Activated CD4-positive, alpha-beta T cell treated with anti-CD3 and anti-CD28 coated beads for 36 hours (primary cell): ENCODE measurements at regions of chr7 and their contacts with region 1.

Region 1: DNA sequence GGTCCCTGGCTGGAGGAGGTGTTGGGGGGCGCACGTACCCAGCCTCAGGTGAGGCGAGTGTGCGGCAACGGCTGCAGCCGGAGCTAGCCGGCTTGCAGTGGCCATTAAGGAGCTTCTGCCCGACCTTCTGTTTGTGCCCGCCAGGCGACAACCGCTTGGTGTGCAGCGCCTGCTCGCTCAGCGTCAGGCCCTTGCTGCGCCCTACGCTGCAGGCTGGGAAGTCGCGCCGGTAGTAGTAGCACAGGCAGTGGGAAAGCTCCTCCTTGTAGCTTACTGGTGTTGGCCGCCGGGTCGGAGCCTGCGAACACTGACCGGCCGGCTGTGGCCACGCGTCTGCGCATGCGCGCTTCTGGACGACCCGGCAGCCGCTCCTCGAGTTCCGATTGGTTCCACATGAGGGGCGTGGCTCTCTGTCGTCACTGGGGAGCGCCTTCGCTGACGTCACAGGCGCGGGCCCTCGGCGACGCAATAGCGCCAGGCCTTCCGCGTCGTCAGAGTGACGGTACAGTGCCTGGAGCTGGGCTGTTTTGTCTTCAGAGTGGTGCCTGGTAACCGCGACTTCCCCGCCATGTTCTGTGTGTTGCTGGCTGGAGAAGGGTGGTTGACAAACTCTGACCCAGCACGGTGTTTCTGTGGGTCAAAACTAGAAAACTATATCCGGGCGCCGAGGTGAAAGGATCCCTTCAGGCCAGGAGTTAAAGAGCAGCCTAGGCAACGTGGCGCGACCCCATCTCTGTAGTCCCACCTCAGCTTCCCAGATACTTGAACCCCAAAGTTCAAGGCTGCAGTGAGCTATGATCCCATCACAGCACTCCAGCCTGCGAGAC is 76.3 kb upstream of the TMEM248 start:
- DNase-seq: peak; percentile 99
- ATAC-seq: peak; percentile 94
- H3K4me3 Mint-ChIP-seq: peak overlapping the region; percentile 95
- H3K27ac Mint-ChIP-seq: peak overlapping the region; percentile 99
- H3K4me1 Mint-ChIP-seq: peaks cover 24% of the 10 kb centered on the region
- H3K27me3 Mint-ChIP-seq: no peaks in the 10 kb centered on the region

Region 2: GRCh38 chr7:65750511-65751344 is 1094.0 kb before region 1 on chr7:
- CTCF ChIA-PET with region 1: no interaction called
- POLR2A ChIA-PET with region 1: no interaction called
- intact Hi-C with region 1: loop called in 1 of 2 experiments (anchors 2 kb)
- DNase-seq: peak; percentile 93
- ATAC-seq: peak; percentile 99
- H3K4me3 Mint-ChIP-seq: peak overlapping the region; percentile 95
- H3K27ac Mint-ChIP-seq: peak overlapping the region; percentile 94
- H3K4me1 Mint-ChIP-seq: peaks cover 31% of the 10 kb centered on the region
- H3K27me3 Mint-ChIP-seq: no peaks in the 10 kb centered on the region

Region 3: GRCh38 chr7:66591799-66592596 is 252.8 kb before region 1 on chr7:
- CTCF ChIA-PET with region 1: no interaction called
- POLR2A ChIA-PET with region 1: no interaction called
- intact Hi-C with region 1: loop called in 1 of 2 experiments (anchors 1 kb)
- DNase-seq: peak; percentile 96
- ATAC-seq: peak; percentile 98
- H3K4me3 Mint-ChIP-seq: peak overlapping the region; percentile 94
- H3K27ac Mint-ChIP-seq: peak overlapping the region; percentile 98
- H3K4me1 Mint-ChIP-seq: peaks cover 46% of the 10 kb centered on the region
- H3K27me3 Mint-ChIP-seq: no peaks in the 10 kb centered on the region

Region 4: DNA sequence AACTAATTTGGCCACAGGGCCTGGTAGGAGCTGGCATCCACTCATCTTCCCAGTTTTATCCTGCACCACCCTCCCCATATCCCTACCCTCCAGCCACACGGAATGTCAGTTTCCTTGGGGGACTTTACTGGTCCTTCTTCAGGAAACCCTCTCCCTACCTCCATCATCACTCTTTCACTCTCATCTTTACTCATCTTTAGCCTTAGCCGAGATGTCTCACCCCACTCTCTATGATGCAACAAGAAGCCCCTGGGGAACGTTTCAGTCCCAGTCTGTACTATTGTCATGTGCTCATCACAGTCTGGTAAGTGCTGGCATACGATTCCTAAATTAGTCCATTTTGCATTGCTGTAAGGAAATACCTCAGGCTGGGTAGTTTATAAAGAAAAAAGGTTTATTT is 41.4 kb after region 1 on chr7:
- CTCF ChIA-PET with region 1: interaction called, 5 read pairs
- POLR2A ChIA-PET with region 1: no interaction called
- intact Hi-C with region 1: loop called (anchors 1 to 2 kb)
- DNase-seq: peak; percentile 33
- ATAC-seq: peak; percentile 13
- H3K4me3 Mint-ChIP-seq: no peak overlapping the region
- H3K27ac Mint-ChIP-seq: peak overlapping the region; percentile 72
- H3K4me1 Mint-ChIP-seq: peaks cover 44% of the 10 kb centered on the region
- H3K27me3 Mint-ChIP-seq: no peaks in the 10 kb centered on the region

Region 5: GRCh38 chr7:67267914-67268313 is 423.1 kb after region 1 on chr7:
- CTCF ChIA-PET with region 1: no interaction called
- POLR2A ChIA-PET with region 1: no interaction called
- intact Hi-C with region 1: no loop called
- DNase-seq: no peak
- ATAC-seq: no peak
- H3K4me3 Mint-ChIP-seq: no peak overlapping the region
- H3K27ac Mint-ChIP-seq: no peak overlapping the region
- H3K4me1 Mint-ChIP-seq: no peaks in the 10 kb centered on the region
- H3K27me3 Mint-ChIP-seq: no peaks in the 10 kb centered on the region

Region 6: DNA sequence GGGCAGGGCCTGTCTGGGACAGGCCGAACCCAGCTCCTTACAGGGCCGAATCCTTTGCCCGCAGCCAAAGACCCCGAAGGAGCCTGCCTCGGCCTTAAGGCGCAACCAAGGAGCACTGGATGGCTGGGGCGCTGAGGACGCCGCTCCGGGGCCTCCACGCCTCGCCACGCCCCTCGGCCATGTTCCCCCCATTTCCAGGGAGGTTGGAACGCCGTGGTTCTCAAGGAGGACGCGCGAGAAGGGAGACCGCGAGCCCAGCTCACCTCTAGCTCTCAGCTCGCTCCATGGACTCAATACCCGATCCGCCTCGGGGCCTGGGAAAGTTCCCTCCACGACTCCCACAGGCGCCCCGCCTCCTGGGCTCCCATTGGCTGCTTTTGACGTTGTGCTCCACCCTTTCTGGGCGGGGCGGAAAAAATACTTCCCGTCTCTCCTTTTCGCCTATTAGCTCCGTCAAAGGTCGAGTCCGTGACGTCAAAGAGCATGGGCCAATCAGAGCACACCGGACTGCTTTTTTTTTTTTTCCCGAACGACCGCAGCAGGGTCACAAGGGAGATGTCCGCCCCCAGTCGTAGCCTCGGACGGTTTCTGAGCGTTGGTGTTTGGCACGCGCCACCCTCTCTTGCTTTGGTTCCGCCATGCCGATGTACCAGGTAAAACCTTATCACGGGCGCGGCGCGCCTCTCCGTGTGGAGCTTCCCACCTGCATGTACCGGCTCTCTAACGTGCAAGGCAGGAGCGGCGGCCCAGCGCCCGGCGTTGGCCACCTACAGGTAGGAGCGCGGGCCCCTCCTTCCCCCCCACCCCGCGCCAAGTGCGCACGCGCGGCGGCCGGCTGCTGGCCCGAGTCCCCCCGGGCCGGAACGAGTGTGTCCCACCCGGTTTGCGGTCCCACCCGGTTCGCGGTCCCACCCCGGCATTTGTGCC is 457.6 kb after region 1 on chr7:
- CTCF ChIA-PET with region 1: no interaction called
- POLR2A ChIA-PET with region 1: no interaction called
- intact Hi-C with region 1: loop called (anchors 1 to 5 kb)
- DNase-seq: peak; percentile 99
- ATAC-seq: peak; percentile 88
- H3K4me3 Mint-ChIP-seq: peak overlapping the region; percentile 88
- H3K27ac Mint-ChIP-seq: peak overlapping the region; percentile 92
- H3K4me1 Mint-ChIP-seq: peaks cover 18% of the 10 kb centered on the region
- H3K27me3 Mint-ChIP-seq: no peaks in the 10 kb centered on the region